Calu3 (cell line): ENCODE measurements at regions of chrX and their contacts with region 1.

Region 1: GRCh38 chrX:155577681-155578080 is 35.1 kb downstream of the TMLHE start:
- DNase-seq: no peak
- H3K4me3 Mint-ChIP-seq: no peak overlapping the region
- H3K27ac Mint-ChIP-seq: no peak overlapping the region
- H3K4me1 Mint-ChIP-seq: peaks cover 9% of the 10 kb centered on the region
- H3K27me3 Mint-ChIP-seq: no peaks in the 10 kb centered on the region
- CTCF ChIP-seq: no peak

Region 2: DNA sequence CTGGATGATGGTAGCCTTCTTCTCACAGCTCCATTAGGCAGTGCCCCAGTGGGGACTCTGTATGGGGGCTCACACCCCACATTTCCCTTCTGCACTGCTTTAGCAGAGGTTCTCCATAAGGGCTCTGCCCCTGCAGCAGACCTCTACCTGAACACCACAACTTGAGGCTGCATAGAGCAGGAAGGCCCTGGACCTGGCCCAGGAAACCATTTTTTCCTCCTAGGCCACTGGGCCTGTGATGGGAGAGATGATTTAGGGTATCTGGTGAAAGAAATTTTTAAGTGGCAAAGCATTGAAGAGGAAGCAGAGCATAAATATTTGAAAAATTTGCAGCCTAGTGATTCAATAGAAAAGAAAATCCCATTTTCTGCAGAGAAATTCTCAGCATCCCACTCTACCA is 136.6 kb before region 1 on chrX:
- CTCF ChIA-PET with region 1: no interaction called
- intact Hi-C with region 1: no loop called
- DNase-seq: no peak
- H3K4me3 Mint-ChIP-seq: no peak overlapping the region
- H3K27ac Mint-ChIP-seq: no peak overlapping the region
- H3K4me1 Mint-ChIP-seq: no peaks in the 10 kb centered on the region
- H3K27me3 Mint-ChIP-seq: no peaks in the 10 kb centered on the region
- CTCF ChIP-seq: no peak

Region 3: GRCh38 chrX:155505296-155505695 is 72.4 kb before region 1 on chrX:
- CTCF ChIA-PET with region 1: no interaction called
- intact Hi-C with region 1: loop called (anchors 10 kb)
- DNase-seq: no peak
- H3K4me3 Mint-ChIP-seq: no peak overlapping the region
- H3K27ac Mint-ChIP-seq: no peak overlapping the region
- H3K4me1 Mint-ChIP-seq: peaks cover 22% of the 10 kb centered on the region
- H3K27me3 Mint-ChIP-seq: no peaks in the 10 kb centered on the region
- CTCF ChIP-seq: no peak